ENCODE measurements at regions of chr5 and their contacts with region 1.

Region 1: GRCh38 chr5:373710-374602 is 52.4 kb downstream of the AHRR start:
- DNase-seq: peak; percentile 66
- H3K4me3 ChIP-seq: peak overlapping the region in 2 of 3 experiments; percentile 21 to 54
- H3K27ac ChIP-seq: peak overlapping the region; percentile 82
- H3K4me1 ChIP-seq: peaks cover 30% of the 10 kb centered on the region
- H3K27me3 ChIP-seq: no peaks in the 10 kb centered on the region
- CTCF ChIP-seq: no peak
- POLR2A ChIP-seq: peak; percentile 37

Region 2: GRCh38 chr5:343461-344401 is 30.2 kb before region 1 on chr5:
- CTCF ChIA-PET with region 1: interaction called, 3 read pairs
- POLR2A ChIA-PET with region 1: no interaction called
- dilution Hi-C with region 1: no loop called
- intact Hi-C with region 1: loop called (anchors 1 kb)
- DNase-seq: peak; percentile 45
- H3K4me3 ChIP-seq: peak overlapping the region in 1 of 3 experiments; percentile 29
- H3K27ac ChIP-seq: no peak overlapping the region
- H3K4me1 ChIP-seq: peaks cover 2% of the 10 kb centered on the region
- H3K27me3 ChIP-seq: no peaks in the 10 kb centered on the region
- CTCF ChIP-seq: no peak
- POLR2A ChIP-seq: no peak

Region 3: DNA sequence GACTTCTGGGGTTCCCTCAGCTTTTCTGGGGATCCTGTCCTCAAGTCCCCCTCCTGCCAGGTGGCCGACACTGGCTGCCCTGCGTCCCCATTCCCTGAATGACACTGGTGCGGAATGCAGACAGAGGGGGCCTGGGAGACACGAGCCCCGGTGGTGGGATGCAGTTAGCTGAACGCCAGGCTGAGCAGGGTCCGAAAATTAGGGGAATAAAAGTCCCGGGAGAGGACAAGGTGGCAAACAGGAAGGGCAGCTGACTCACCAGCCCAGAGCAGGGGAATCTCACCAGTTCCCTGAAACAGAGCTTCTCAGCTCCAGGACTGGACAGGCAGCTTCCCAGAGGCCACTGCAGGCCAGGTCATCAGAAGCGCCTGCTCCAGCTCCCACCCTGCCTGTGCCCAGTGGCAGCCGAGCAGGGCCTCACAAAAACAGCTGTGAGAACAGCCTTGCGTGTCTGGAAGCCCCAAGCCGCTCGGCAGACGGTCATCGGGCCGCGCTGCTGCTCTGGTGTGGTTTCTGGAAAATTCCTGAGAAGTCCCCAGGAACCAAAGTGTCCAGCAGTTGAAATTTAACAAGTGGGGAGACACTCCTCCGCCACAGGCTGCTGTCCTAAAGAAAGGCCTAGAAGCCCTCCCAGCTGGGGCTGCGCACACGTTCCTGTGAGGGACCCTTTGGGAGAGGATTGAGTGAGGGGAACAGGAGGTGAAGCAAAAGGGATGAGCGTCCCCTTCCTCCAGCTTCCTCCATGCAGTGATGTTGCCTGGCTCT is 21.4 kb after region 1 on chr5:
- CTCF ChIA-PET with region 1: interaction called, 3 read pairs
- POLR2A ChIA-PET with region 1: no interaction called
- dilution Hi-C with region 1: no loop called
- intact Hi-C with region 1: loop called (anchors 2 kb)
- DNase-seq: peak; percentile 73
- H3K4me3 ChIP-seq: no peak overlapping the region
- H3K27ac ChIP-seq: peak overlapping the region; percentile 64
- H3K4me1 ChIP-seq: peaks cover 34% of the 10 kb centered on the region
- H3K27me3 ChIP-seq: no peaks in the 10 kb centered on the region
- CTCF ChIP-seq: no peak
- POLR2A ChIP-seq: no peak

Region 4: DNA sequence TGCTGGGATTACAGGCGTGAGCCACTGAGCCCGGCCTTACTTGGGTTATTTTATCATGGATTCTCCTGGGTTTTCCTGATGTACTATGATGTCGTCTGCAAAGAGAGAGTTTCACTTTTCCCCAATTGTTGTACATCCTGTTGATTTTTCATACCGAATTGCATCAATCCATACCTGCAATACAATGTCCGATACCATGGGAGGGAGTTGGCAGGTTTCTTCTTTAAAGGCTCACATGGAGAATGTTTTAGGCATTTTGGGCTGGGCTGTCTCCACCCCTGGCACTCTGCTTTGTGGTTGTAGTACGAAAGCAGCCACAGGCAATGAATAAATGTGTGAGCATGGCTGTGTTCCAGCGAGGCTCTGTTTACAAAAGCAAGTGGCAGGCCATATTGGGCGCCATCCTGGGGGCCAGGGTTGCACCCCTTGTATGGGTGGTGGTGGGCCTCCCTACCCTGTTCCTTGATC is 33.9 kb after region 1 on chr5:
- CTCF ChIA-PET with region 1: no interaction called
- POLR2A ChIA-PET with region 1: no interaction called
- dilution Hi-C with region 1: no loop called
- intact Hi-C with region 1: no loop called
- DNase-seq: no peak
- H3K4me3 ChIP-seq: no peak overlapping the region
- H3K27ac ChIP-seq: no peak overlapping the region
- H3K4me1 ChIP-seq: peaks cover 8% of the 10 kb centered on the region
- H3K27me3 ChIP-seq: no peaks in the 10 kb centered on the region
- CTCF ChIP-seq: no peak
- POLR2A ChIP-seq: no peak

Region 5: DNA sequence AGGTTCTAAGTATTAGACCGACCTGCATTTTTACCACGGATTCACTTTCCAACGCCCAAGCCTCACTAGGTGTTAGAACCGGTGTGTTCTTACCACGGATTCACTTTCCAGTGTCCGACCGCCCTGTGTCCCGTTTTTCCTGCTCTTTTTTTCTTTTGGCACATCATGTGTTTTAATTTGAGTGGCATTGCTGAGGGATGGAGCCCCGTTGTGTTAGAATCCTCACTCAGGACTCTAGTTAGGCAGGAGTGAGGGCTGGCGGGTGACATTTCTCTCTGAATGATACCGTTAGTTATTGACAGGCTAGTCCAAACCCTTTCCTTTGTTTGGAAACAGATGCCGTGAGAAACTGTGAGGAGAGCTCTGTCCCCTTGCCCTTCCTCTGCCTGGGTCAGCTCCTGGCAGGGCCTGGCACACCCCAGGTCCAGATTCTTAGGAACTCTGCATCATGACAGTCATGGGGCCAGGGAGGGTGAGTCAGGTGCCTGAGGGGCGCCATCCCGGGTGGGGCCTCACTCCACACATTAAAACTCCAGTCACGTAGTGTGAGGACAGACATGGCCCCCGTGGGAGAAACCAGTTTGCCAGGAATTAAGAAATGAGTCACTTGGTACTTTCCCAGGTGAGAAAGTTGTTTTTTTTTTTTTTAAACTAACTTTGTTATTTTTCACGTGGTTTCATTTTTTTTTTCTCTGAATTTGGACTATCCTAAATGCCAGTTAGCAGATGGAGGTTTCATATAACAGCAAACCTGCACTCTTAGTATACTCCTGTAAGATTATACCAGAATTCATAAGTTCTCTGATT is 84.8 kb after region 1 on chr5:
- CTCF ChIA-PET with region 1: no interaction called
- POLR2A ChIA-PET with region 1: no interaction called
- dilution Hi-C with region 1: no loop called
- intact Hi-C with region 1: no loop called
- DNase-seq: peak; percentile 8
- H3K4me3 ChIP-seq: no peak overlapping the region
- H3K27ac ChIP-seq: no peak overlapping the region
- H3K4me1 ChIP-seq: no peaks in the 10 kb centered on the region
- H3K27me3 ChIP-seq: no peaks in the 10 kb centered on the region
- CTCF ChIP-seq: no peak
- POLR2A ChIP-seq: no peak

Region 6: GRCh38 chr5:472656-473553 is 98.9 kb after region 1 on chr5:
- CTCF ChIA-PET with region 1: no interaction called
- POLR2A ChIA-PET with region 1: no interaction called
- dilution Hi-C with region 1: no loop called
- intact Hi-C with region 1: no loop called
- DNase-seq: peak; percentile 75
- H3K4me3 ChIP-seq: peak overlapping the region; percentile 49 to 79 (median 55)
- H3K27ac ChIP-seq: peak overlapping the region; percentile 82
- H3K4me1 ChIP-seq: peaks cover 6% of the 10 kb centered on the region
- H3K27me3 ChIP-seq: peaks cover 5 to 10% of the 10 kb centered on the region in 2 experiments
- CTCF ChIP-seq: no peak
- POLR2A ChIP-seq: peak; percentile 63

Region 7: DNA sequence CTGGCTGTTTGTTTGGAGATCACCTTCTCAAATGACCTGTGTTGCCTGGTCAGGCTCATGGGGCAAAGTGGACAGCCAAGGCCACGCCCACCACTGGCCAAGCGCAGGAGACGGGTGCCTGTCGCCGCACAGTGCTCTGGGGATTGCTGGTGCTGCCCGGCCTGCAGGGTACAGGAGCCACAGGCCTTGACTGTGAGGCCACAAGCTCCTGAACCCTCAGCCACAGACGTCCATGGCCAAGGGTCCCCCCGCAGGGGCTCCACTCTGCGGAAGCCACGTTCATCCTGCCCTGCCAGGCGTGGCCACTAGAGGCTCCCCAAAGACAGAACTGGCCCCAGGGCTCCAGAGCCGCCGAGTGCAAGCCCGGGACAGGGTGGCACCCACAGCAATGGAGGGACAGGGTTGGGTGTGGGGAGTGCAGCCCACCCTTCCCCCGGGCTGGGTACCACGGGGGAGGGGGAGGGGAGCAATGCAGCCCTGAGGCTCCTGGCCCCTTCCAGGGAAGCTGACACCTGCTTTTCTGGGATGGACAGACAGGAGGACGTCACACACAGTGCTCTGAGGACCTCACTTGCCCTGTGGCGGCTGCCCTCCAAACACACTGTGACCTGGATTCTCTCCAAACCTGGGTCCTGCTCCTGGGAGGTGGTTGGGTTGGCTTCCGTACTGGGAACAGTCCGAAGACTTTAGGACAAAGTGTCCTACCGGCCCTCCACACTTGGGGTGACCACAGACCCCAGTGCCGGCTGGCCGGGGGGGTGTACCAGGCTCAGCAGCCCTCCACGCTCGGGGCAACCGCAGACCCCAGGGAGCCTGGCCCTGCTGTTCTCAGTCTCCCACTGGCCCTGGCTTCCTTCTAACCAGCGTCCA is 297.7 kb after region 1 on chr5:
- CTCF ChIA-PET with region 1: no interaction called
- POLR2A ChIA-PET with region 1: no interaction called
- dilution Hi-C with region 1: no loop called
- intact Hi-C with region 1: no loop called
- DNase-seq: peak; percentile 52
- H3K4me3 ChIP-seq: no peak overlapping the region
- H3K27ac ChIP-seq: no peak overlapping the region
- H3K4me1 ChIP-seq: no peaks in the 10 kb centered on the region
- H3K27me3 ChIP-seq: no peaks in the 10 kb centered on the region
- CTCF ChIP-seq: peak; percentile 83 to 95
- POLR2A ChIP-seq: no peak

Measured in endothelial cell of umbilical vein (primary cell).